ENCODE measurements at regions of chr15 and their contacts with region 1.

Region 1: DNA sequence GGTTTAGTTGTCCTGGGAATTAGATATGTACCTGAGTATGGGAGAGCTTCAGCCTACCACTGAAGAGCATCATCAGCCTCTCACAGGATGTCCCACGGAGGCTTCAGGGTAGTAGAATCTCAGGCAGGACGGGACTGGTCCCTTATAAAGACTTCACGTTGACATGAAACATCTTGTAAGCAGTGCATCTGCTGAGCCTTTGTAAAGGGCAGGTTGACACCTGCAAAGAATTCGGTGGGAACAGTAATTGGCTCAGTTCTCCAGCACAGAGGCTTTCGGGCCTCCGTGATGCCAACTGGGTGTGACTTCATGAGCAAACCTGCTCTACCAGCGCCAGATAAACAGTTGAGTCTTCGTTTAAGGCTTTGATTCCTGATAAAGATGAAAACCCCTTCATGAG is 26.9 kb upstream of the AVEN start:
- DNase-seq: no peak
- H3K4me3 Mint-ChIP-seq: no peak overlapping the region
- H3K27ac Mint-ChIP-seq: no peak overlapping the region
- H3K4me1 Mint-ChIP-seq: peaks cover 4% of the 10 kb centered on the region
- H3K27me3 Mint-ChIP-seq: no peaks in the 10 kb centered on the region

Region 2: DNA sequence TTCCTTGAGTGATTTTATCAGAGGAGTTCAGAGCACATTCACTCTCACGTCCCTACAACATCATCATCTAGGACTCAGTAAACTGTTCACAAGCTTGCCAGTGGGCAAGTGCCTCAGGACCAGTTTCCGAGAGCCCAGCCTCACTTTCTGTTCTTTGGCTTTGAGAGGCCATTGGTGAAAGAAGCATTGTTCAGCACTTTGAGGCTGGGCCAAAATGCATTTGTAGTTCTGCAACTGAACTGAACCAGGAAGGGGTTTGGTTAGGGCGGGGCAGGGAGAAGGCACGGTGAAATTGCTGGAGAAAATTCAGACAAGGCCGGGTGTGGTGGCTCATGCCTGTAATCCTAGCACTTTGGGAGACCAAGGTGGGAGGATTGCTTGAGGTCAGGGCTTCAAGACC is 319.7 kb before region 1 on chr15:
- CTCF ChIA-PET with region 1: no interaction called
- POLR2A ChIA-PET with region 1: no interaction called
- intact Hi-C with region 1: no loop called
- DNase-seq: no peak
- H3K4me3 Mint-ChIP-seq: no peak overlapping the region
- H3K27ac Mint-ChIP-seq: no peak overlapping the region
- H3K4me1 Mint-ChIP-seq: no peaks in the 10 kb centered on the region
- H3K27me3 Mint-ChIP-seq: no peaks in the 10 kb centered on the region

Region 3: GRCh38 chr15:34223904-34224596 is 158.1 kb after region 1 on chr15:
- CTCF ChIA-PET with region 1: no interaction called
- POLR2A ChIA-PET with region 1: no interaction called
- intact Hi-C with region 1: no loop called
- DNase-seq: no peak
- H3K4me3 Mint-ChIP-seq: peak overlapping the region; percentile 98
- H3K27ac Mint-ChIP-seq: peak overlapping the region; percentile 98
- H3K4me1 Mint-ChIP-seq: peaks cover 27% of the 10 kb centered on the region
- H3K27me3 Mint-ChIP-seq: peaks cover 2% of the 10 kb centered on the region

Region 4: DNA sequence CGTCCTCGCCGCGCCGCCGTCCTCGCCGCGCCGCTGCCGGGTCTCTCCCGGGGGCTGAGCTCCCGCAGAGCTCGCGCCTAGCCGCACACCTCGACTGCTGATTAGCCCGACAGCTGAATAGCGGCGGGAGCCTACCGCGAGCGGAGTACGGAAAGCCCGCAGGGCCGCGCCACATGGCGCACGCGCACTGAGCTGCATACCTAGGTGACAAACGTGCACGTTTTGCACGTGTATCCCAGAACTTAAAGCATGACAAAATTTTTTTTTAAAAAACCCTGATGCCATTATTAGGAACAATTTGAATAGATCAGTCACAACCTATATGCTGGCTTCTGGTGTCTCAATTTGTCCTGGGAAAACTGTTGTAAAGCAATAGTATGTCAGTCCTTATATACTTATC is 371.7 kb after region 1 on chr15 and contains the start of gene GOLGA8A:
- CTCF ChIA-PET with region 1: no interaction called
- POLR2A ChIA-PET with region 1: no interaction called
- intact Hi-C with region 1: no loop called
- DNase-seq: peak; percentile 74
- H3K4me3 Mint-ChIP-seq: peak within 1 kb of the TSS; percentile 81
- H3K27ac Mint-ChIP-seq: peak within 1 kb of the TSS; percentile 69
- H3K4me1 Mint-ChIP-seq: peaks cover 4% of the 10 kb centered on the region
- H3K27me3 Mint-ChIP-seq: no peaks in the 10 kb centered on the region
- total RNA-seq, gene GOLGA8A: 65.3 to 72.9 TPM

Region 5: GRCh38 chr15:34927726-34928125 is 861.8 kb after region 1 on chr15:
- CTCF ChIA-PET with region 1: no interaction called
- POLR2A ChIA-PET with region 1: no interaction called
- intact Hi-C with region 1: loop called (anchors 10 kb)
- DNase-seq: no peak
- H3K4me3 Mint-ChIP-seq: no peak overlapping the region
- H3K27ac Mint-ChIP-seq: no peak overlapping the region
- H3K4me1 Mint-ChIP-seq: no peaks in the 10 kb centered on the region
- H3K27me3 Mint-ChIP-seq: no peaks in the 10 kb centered on the region

Measured in activated CD4-positive, alpha-beta memory T cell treated with anti-CD3 and anti-CD28 coated beads for 36 hours (primary cell).